Left cardiac atrium (tissue), 4 donors: ENCODE measurements at regions of chr3 and their contacts with region 1.

Region 1: GRCh38 chr3:129052675-129053074 is 7.9 kb upstream of the GP9 start:
- DNase-seq: peak; percentile 75
- ATAC-seq: peak; percentile 74 to 87

Region 2: DNA sequence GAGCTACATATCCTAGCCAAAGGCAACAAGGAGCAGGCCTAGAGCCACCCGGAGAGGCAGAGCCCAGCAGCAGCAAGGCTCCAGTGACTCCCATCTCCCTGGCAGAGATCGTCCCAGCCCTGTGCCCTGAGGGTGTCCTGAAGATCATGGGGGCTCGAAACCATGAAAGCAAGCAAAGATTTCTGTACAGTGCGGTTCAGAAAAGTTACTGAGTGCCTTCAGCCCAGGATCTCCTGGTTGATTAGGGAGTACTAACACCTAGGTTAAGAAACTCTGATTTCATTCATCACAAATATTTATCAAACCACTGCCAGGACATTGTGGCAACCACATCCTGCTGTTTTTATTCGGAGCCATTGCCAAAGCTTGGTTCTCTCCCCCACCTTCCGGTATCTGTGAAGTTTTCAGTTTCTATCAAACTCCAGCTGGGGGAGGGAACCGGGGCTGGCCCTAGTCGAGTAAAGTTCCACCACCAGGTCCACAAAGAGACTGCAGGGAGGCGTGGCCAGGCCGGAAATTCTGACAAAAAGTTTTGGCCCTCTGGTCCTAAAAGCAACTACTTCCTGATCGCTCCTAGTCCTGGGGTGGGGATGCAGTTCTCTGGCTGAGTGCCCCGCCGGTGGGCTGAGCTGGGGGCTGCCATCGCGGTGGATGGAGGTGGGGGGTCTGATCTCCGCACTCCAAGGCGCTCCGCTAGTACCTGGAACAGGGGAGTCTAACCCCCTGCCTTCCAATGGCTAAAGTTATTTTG is 67.8 kb after region 1 on chr3:
- intact Hi-C with region 1: loop called in 1 of 2 experiments (anchors 2 kb)
- DNase-seq: peak; percentile 92
- ATAC-seq: peak; percentile 65 to 67